Caco-2 (cell line): ENCODE measurements at regions of chr6 and their contacts with region 1.

Region 1: GRCh38 chr6:34027445-34027936 is 118.4 kb downstream of the GRM4 start:
- DNase-seq: peak; percentile 56 to 79
- H3K4me3 ChIP-seq: no peak overlapping the region
- H3K4me3 Mint-ChIP-seq: no peak overlapping the region
- H3K27ac Mint-ChIP-seq: no peak overlapping the region
- H3K4me1 ChIP-seq: no peaks in the 10 kb centered on the region
- H3K4me1 Mint-ChIP-seq: no peaks in the 10 kb centered on the region
- H3K27me3 ChIP-seq: no peaks in the 10 kb centered on the region; the same call in 1 of the 2 replicates
- H3K27me3 Mint-ChIP-seq: peaks cover 4% of the 10 kb centered on the region
- CTCF ChIP-seq: peak; percentile 87 to 89

Region 2: GRCh38 chr6:33761922-33762629 is 265.4 kb before region 1 on chr6:
- CTCF ChIA-PET with region 1: interaction called, 13 read pairs
- POLR2A ChIA-PET with region 1: no interaction called
- intact Hi-C with region 1: no loop called
- DNase-seq: peak; percentile 90 to 92
- H3K4me3 ChIP-seq: no peak overlapping the region
- H3K4me3 Mint-ChIP-seq: no peak overlapping the region
- H3K27ac Mint-ChIP-seq: no peak overlapping the region
- H3K4me1 ChIP-seq: peaks cover 7% of the 10 kb centered on the region; the same call in 1 of the 2 replicates
- H3K4me1 Mint-ChIP-seq: peaks cover 10% of the 10 kb centered on the region
- H3K27me3 ChIP-seq: no peaks in the 10 kb centered on the region
- H3K27me3 Mint-ChIP-seq: no peaks in the 10 kb centered on the region
- CTCF ChIP-seq: peak; percentile 80 to 92

Region 3: DNA sequence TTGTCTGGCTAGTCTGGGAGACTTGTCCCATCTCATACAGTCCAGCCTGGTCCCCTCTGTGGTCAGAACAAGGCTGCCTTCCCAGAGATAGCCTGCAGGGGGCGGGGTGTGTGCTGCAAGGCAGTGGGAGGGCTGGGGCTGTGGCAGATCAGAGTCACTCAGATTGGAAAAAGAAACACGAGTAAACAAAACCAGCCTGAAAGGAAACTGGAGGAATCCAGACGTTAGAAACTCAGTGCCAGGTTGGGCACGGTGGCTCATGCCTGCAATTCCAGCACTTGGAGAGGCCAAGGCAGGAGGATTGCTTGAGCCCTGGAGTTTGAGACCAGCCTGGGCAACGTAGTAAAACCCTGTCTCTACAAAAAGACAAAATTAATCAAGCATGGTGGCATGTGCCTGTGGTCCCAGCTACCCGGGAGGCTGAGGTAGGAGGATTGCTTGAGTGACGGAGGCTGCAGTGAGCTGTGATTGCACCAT is 258.8 kb before region 1 on chr6:
- CTCF ChIA-PET with region 1: interaction called, 13 read pairs
- POLR2A ChIA-PET with region 1: no interaction called
- intact Hi-C with region 1: loop called (anchors 1 kb)
- DNase-seq: peak; percentile 76 to 85
- H3K4me3 ChIP-seq: no peak overlapping the region
- H3K4me3 Mint-ChIP-seq: no peak overlapping the region
- H3K27ac Mint-ChIP-seq: no peak overlapping the region
- H3K4me1 ChIP-seq: no peaks in the 10 kb centered on the region
- H3K4me1 Mint-ChIP-seq: no peaks in the 10 kb centered on the region
- H3K27me3 ChIP-seq: no peaks in the 10 kb centered on the region
- H3K27me3 Mint-ChIP-seq: no peaks in the 10 kb centered on the region
- CTCF ChIP-seq: peak; percentile 80 to 88

Region 4: GRCh38 chr6:33851959-33852358 is 175.5 kb before region 1 on chr6:
- CTCF ChIA-PET with region 1: no interaction called
- POLR2A ChIA-PET with region 1: interaction called, 11 read pairs
- intact Hi-C with region 1: loop called (anchors 10 kb)
- DNase-seq: peak; percentile 60 to 68
- H3K4me3 ChIP-seq: no peak overlapping the region
- H3K4me3 Mint-ChIP-seq: no peak overlapping the region
- H3K27ac Mint-ChIP-seq: no peak overlapping the region
- H3K4me1 ChIP-seq: peaks cover 30% of the 10 kb centered on the region
- H3K4me1 Mint-ChIP-seq: peaks cover 8% of the 10 kb centered on the region
- H3K27me3 ChIP-seq: no peaks in the 10 kb centered on the region; the same call in 1 of the 2 replicates
- H3K27me3 Mint-ChIP-seq: no peaks in the 10 kb centered on the region
- CTCF ChIP-seq: peak; percentile 36 to 88

Region 5: DNA sequence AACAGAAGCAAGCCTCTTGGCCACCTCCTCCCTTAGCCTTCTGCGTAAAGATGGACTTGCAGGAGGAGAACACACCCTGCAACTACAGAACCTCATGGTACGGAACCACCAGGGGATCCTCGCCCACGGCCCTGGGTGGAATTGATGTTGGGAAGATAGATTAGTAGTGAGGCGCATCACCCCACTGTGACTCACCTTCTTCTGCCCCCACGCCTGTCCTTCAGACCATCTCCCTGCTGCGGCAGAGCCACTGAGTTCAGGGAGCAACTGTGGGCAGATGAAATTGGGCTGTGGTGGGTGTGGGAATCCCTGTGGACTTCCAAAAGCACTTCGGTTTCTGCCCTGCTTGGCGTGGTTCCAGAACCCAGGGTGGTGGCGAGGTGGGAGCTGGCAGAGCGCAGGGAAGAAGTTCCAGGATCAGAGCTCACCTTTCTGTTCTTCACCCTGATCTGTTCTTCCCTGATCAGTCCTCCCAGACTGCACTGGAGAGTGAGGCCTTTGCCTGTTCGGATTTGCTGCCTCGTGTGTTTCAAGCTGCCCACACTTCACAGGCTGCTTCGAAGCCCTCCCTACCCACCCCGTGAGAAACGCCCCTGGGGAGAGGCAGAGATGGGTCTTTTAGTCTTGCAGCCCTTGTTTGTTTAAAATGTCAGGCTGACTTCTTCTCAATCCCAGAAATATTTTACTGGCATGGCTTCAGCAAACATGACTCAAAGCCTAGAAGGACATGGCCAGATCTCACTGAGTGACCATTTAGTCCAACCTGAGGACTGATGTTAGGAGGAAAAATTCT is 130.9 kb before region 1 on chr6:
- CTCF ChIA-PET with region 1: no interaction called
- POLR2A ChIA-PET with region 1: no interaction called
- intact Hi-C with region 1: no loop called
- DNase-seq: no peak
- H3K4me3 ChIP-seq: no peak overlapping the region
- H3K4me3 Mint-ChIP-seq: no peak overlapping the region
- H3K27ac Mint-ChIP-seq: no peak overlapping the region
- H3K4me1 ChIP-seq: no peaks in the 10 kb centered on the region
- H3K4me1 Mint-ChIP-seq: no peaks in the 10 kb centered on the region
- H3K27me3 ChIP-seq: no peaks in the 10 kb centered on the region
- H3K27me3 Mint-ChIP-seq: peaks cover under 1% of the 10 kb centered on the region
- CTCF ChIP-seq: no peak

Region 6: DNA sequence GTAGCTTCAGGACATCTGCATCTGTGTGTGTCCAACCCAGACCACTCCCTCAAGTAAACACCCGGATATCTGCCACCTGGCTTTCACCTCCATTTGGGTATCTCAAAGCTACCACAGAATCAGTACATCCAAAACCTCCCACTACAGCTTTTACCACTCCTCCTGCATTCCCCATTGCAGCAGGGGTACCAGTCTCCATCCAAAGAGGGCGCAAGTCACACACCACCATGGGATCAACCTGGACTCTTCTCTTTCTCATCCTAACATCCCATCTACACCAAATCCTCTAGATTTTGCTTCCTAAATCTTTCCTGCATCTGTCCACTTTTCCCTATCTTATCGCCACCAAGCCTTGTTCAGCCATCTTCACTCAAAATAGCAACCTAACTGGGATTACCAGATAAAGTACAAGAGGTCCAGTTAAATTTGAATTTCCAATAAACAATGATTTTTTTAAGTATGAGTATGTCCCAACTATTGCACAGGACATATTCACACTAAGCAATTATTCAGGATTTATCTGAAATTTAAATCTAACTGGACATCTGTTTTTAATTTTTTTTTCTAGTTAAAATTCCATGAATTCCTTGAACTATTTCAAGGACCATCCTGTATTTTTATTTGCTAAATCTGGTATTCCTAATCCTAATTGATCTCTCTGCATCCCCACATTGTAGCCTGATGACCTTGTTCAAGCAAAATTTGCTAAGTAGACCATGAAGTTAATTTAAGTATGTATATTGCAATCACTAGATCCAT is 59.3 kb before region 1 on chr6:
- CTCF ChIA-PET with region 1: interaction called, 9 read pairs
- POLR2A ChIA-PET with region 1: no interaction called
- intact Hi-C with region 1: loop called (anchors 1 kb)
- DNase-seq: peak; percentile 44 to 58
- H3K4me3 ChIP-seq: no peak overlapping the region
- H3K4me3 Mint-ChIP-seq: no peak overlapping the region
- H3K27ac Mint-ChIP-seq: no peak overlapping the region
- H3K4me1 ChIP-seq: no peaks in the 10 kb centered on the region
- H3K4me1 Mint-ChIP-seq: peaks cover 11% of the 10 kb centered on the region
- H3K27me3 ChIP-seq: no peaks in the 10 kb centered on the region; the same call in 1 of the 2 replicates
- H3K27me3 Mint-ChIP-seq: peaks cover 17% of the 10 kb centered on the region
- CTCF ChIP-seq: peak; percentile 59 to 86

Region 7: DNA sequence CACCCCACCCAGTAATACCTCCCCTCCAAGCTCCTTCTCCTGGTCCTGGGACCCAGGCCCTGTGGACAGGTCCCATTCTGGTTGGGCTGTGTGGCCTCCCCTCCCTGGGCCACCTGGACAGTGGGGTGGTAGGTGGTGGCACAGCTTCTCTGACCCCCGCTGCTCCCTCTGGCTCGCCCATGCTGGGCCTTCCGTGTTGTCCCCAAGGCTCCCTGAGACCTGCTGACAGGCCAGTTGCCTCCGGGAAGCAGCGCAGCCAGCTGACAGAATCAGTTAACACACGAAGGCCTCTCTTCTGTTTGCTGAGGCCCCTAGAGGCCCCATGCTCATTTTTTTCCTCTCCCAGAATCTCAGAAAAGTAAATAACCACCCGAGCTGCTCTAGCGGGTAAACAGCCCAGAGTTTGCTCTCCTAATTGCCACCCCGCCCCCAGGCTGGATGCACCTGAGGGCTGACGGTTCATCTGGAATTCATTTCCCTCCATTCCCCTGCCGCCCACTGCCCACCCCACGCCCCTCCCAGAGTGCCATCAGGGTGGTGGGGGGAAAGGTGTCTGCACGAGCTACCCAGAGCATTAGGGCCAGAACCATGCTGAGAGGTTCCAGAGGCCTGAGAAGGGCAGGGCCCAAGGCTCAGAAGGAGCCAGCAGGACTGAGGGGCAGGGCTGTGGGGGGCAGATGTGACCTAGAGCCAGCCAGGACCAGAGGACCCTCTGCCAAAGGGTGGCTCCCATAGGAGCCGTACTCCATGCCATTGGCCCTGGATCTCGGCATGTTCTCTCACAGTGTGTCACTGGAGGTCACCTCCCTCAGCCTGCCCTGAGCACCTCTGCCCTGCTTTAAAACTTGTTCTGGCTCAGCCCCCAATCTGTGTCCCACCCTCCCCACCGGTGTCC is 39.1 kb before region 1 on chr6:
- CTCF ChIA-PET with region 1: interaction called, 6 read pairs
- POLR2A ChIA-PET with region 1: no interaction called
- intact Hi-C with region 1: loop called (anchors 1 kb)
- DNase-seq: peak; percentile 86 to 88
- H3K4me3 ChIP-seq: peak overlapping the region; percentile 13
- H3K4me3 Mint-ChIP-seq: peak overlapping the region; percentile 59
- H3K27ac Mint-ChIP-seq: no peak overlapping the region
- H3K4me1 ChIP-seq: peaks cover 17% of the 10 kb centered on the region
- H3K4me1 Mint-ChIP-seq: peaks cover 17% of the 10 kb centered on the region
- H3K27me3 ChIP-seq: no peaks in the 10 kb centered on the region; the same call in 1 of the 2 replicates
- H3K27me3 Mint-ChIP-seq: peaks cover 2% of the 10 kb centered on the region
- CTCF ChIP-seq: peak in 1 of 2 experiments; percentile 33